OCI-LY7 (cell line): ENCODE measurements at regions of chr3 and their contacts with region 1.

Region 1: GRCh38 chr3:46845397-46845790 is 17.9 kb downstream of the MYL3 start:
- DNase-seq: no peak
- H3K4me3 ChIP-seq: no peak overlapping the region
- H3K27ac ChIP-seq: no peak overlapping the region
- H3K4me1 ChIP-seq: no peaks in the 10 kb centered on the region
- CTCF ChIP-seq: no peak

Region 2: DNA sequence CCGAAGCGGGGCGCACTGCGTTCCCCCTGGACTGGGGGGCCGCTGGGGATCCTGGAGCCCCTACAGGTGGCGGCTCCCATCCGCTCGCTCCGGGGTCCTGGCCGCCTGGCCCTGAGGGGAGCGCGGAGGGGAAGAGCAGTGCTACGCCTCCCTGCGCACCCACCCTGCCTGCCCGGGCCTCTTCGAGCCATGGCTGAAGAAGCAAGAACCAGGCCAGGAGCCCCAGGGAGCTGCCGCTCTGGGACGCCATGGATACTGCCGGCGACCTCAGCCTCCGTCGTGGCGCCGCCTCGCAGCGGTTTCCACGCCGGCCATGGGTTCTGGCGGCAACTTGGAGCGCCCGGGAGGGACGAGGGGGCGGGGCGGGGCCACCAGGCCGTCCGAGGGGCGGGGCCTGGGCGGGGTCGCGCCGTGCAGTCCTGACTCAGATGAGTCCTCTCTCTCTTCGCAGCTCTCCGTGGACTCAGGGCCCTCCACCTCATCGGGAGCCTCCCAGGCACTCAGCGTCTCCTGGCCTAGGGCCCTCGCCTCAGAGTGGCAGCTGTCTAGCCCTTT is 33.1 kb before region 1 on chr3:
- CTCF ChIA-PET with region 1: no interaction called
- POLR2A ChIA-PET with region 1: no interaction called
- intact Hi-C with region 1: no loop called
- DNase-seq: no peak
- H3K4me3 ChIP-seq: no peak overlapping the region
- H3K27ac ChIP-seq: no peak overlapping the region
- H3K4me1 ChIP-seq: no peaks in the 10 kb centered on the region
- CTCF ChIP-seq: no peak

Region 3: GRCh38 chr3:48599077-48599501 is 1753.7 kb after region 1 on chr3:
- CTCF ChIA-PET with region 1: no interaction called
- POLR2A ChIA-PET with region 1: interaction called, 12 read pairs
- intact Hi-C with region 1: no loop called
- DNase-seq: no peak
- H3K4me3 ChIP-seq: no peak overlapping the region
- H3K27ac ChIP-seq: no peak overlapping the region
- H3K4me1 ChIP-seq: no peaks in the 10 kb centered on the region
- CTCF ChIP-seq: no peak